Vagina (tissue), 2 donors: ENCODE measurements at regions of chr3 and their contacts with region 1.

Region 1: DNA sequence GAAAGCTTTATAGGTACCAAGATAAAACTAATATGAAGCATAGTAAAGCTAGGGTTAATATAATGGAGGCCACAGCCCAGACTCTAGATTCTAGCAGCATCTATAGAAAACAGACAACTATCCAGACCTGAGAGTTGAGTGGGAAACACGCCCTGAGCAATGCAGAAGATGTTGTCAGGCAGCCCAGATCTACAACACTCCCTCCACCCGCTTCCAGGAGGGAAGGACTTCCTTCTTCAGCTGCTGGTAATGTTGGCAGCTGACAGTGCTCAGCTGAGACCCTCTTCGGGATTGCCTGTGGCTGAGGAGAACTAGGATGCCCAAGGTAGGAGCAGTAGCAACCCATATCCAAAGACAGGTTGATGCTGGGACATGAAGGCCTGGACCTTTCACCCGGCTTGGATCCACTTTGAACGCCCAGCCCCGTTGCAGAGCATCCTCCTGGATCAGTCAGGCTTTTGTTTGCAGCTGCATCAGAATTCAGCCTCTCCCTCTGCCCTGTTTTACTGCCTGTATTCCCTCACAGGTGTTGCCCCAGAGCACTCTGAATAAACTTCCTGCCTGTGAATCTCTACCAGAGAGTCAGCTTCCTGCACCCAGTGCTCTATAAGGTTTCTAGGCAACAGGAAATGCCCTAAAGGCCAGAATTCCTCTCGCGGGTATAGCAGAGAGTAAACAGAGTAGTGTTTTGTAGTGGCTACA is 174.7 kb upstream of the IL12A start:
- DNase-seq: no peak
- H3K4me3 ChIP-seq: no peak overlapping the region
- H3K27ac ChIP-seq: no peak overlapping the region
- H3K4me1 ChIP-seq: peaks cover 12% of the 10 kb centered on the region
- H3K27me3 ChIP-seq: no peaks in the 10 kb centered on the region
- CTCF ChIP-seq: no peak
- POLR2A ChIP-seq: no peak

Region 2: DNA sequence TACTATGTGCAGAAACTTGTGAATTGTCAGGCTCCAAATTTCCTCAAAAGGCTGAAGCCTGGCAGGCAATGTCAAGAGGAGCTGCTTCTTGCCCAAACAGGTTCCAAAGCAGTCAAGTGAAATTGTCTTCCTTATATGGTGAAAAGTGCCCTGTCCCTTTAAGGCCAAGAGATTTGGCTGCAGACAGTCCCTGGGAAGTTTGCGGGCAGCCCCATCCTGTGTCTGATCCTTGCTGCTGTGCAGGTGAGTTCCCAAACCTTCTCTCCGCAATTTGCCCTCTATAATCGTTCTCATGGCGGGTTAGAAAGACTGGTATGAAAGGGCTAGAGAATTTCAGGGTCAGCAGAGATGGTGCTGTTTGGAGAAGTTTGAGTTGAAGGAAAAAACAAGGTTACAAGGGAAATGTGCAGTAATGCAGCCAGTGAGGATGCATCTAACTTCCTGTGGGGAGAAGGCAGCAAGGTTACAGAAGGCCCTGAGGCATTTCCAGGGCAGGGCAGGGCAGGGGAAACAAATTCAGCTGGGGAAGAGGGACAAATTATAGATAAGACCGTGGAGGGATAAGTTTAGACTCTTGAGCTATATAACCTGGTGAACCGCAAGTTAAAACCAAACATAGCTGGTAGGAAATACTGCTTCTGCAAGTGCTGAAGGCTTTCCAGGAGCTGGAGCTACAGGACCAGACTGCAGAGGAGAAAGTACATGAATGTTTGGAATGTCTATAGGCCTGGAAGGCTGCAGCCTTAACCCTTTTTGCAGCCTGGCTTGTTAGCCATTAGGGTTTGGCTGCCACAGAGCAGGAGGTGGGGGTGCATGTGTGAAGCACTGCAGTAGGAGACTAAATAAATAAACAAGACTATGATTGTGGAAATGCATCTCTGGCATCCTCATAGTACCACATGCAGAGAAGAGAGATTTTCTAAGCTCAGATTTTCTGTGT is 81.5 kb before region 1 on chr3:
- intact Hi-C with region 1: no loop called
- DNase-seq: no peak
- H3K4me3 ChIP-seq: no peak overlapping the region
- H3K27ac ChIP-seq: no peak overlapping the region
- H3K4me1 ChIP-seq: no peaks in the 10 kb centered on the region
- H3K27me3 ChIP-seq: no peaks in the 10 kb centered on the region
- CTCF ChIP-seq: no peak
- POLR2A ChIP-seq: no peak

Region 3: DNA sequence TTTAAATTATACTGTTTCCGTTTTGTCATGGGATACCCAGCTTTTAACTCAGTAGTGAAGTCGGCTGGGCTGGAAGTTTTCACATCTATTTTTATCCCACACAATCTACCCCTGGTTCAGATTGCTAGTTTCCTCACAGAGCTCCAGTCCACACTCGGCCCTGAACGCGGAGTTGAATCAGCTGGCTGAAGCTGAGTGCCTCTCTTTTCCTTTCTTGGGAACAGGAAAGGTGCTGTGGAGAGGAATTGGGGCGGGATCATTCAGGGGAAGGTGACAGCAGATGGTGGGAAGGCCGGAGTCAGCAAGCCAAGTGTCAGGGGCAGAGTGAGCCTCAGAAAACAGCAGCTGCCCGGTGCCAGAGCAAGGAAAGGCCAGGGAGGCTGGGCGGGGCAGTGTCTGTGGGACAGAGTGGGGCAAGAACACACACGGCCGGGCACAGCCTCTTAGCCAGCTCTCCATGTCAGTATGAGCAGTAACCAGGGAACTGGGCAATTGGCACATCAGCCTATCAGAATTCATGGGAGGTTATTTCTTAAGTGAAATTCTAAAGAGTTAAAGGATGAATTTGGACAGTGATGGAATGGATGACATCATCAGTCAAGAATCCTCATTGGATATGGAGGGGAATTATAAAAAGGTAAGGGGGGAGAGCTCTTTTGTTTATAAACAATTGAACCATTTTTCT is 39.0 kb after region 1 on chr3:
- intact Hi-C with region 1: no loop called
- DNase-seq: no peak
- H3K4me3 ChIP-seq: peak overlapping the region; percentile 28 to 30
- H3K27ac ChIP-seq: peak overlapping the region; percentile 89
- H3K4me1 ChIP-seq: peaks cover 59% of the 10 kb centered on the region
- H3K27me3 ChIP-seq: no peaks in the 10 kb centered on the region
- CTCF ChIP-seq: no peak
- POLR2A ChIP-seq: no peak

Region 4: DNA sequence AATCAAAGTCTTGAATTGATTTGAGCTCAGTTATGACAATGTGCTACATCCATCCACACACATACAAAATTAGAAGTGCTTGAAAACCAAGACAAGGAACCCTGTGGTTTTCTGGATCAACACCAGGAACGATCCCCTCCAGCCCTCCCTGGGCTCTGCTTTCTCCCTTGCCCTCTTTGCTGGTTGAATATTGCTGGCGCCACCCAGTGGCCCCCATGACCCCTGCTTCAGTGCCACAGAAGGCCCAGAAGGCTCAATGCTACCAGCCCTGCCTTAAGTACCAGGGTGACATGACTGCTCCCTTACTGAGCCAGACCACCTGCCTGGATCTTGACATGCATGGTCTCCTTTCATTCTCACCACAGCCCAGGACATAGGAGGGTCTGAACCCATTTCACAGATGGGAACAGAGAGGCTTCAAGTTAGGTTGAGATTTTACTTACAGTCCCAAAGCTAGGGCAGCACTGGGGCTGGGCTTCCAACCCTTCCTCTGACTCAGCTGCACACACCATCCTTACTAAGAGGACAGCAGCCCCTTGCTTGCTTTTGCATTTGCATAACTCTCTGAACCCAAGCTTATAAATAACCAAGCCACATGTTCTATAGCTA is 189.7 kb after region 1 on chr3:
- intact Hi-C with region 1: loop called (anchors 10 kb)
- DNase-seq: no peak
- H3K4me3 ChIP-seq: no peak overlapping the region
- H3K27ac ChIP-seq: no peak overlapping the region
- H3K4me1 ChIP-seq: no peaks in the 10 kb centered on the region
- H3K27me3 ChIP-seq: no peaks in the 10 kb centered on the region
- CTCF ChIP-seq: peak in 1 of 3 experiments; percentile 9
- POLR2A ChIP-seq: no peak